ENCODE measurements at regions of chr20 and their contacts with region 1.

Region 1: DNA sequence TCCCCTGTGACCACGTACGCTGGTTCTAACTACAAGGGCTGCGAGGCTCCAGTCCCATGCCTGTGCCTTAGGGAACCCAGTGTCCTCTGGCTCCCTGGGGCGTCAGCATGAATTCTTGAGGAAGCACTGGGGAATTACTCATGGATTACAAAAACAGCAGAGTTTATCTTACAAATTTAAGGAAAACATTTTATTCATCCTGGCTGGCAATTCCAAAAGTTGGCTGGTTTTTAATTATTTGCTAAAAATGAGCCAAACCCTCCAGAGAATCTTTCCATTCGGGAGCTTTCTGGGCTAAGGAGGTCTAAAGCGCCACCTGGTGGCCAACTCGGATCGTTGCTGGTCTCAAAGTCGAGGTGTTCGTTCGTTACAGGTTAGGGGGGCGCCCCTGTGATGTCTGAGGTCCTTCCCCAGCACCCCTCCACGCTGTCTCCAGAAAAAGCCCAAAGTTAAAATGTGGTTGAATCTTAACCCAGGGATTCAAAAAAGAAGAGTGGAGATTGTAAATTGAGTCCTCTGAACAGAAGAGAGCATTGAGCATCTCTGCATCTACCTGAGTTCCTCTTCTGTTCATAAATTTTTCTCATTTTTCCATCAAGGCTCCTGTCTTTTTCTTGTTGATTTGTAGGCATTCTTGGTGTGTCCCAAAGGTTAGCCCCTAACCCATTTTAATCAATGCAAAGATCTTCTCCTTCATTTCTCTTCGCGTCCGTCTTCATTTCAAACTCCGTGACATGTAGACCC is 99.4 kb downstream of the BFSP1 start:
- DNase-seq: peak; percentile 33
- H3K4me3 ChIP-seq: no peak overlapping the region
- H3K27ac ChIP-seq: no peak overlapping the region
- H3K4me1 ChIP-seq: no peaks in the 10 kb centered on the region
- H3K27me3 ChIP-seq: no peaks in the 10 kb centered on the region
- CTCF ChIP-seq: peak; percentile 70 to 95 (median 84)
- POLR2A ChIP-seq: no peak

Region 2: GRCh38 chr20:16803965-16804792 is 627.6 kb before region 1 on chr20:
- intact Hi-C with region 1: loop called (anchors 1 kb)
- DNase-seq: peak; percentile 29
- H3K4me3 ChIP-seq: no peak overlapping the region
- H3K27ac ChIP-seq: no peak overlapping the region
- H3K4me1 ChIP-seq: no peaks in the 10 kb centered on the region
- H3K27me3 ChIP-seq: peaks cover 8% of the 10 kb centered on the region
- CTCF ChIP-seq: peak; percentile 50 to 72 (median 58)
- POLR2A ChIP-seq: no peak